ENCODE measurements at regions of chr17 and their contacts with region 1.

Region 1: DNA sequence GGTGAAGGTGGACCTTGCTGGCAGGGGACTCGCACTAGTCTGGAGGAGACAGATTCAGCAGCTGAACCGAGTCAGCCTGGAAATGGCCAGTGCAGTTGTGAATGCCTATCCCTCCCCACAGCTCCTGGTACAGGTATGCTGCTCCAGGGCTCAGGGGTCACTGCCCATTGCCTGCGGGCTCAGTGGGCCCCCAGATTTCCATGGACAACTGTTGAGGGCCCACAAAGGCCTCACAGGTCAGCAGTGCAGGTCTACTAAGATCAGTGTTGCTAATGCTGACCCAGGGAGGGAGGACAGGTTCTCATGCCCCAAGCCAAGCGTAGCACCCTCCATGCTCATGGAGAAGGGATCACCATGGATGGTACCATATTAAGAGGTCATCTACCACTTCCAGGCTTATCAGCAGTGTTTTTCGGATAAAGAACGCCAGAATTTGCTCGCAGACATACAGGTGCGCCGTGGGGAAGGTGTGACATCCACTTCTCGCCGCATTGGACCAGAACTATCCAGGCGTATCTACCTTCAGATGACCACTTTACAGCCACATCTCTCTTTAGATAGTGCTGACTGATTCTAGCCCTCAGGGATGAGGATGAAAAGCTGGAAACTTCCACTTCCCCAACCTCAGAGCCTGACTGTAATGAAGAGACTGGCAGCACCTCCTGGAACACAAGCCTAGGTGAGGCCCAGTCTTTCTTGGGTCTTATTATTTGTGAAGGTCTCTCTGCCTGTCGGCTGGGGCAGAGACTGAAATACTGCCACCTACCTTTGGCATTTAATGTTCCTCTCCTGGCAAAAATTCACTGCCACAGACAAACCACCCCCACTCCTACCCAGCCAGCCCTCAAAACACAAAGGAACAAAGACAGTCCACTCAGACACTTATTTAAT is 7.6 kb downstream of the EME1 start:
- DNase-seq: no peak
- ATAC-seq: peak; percentile 39
- H3K4me3 ChIP-seq: no peak overlapping the region
- H3K27ac ChIP-seq: no peak overlapping the region
- H3K4me1 ChIP-seq: peaks cover 0 to 4% of the 10 kb centered on the region in 2 experiments; a peak in 2 of 5 replicates
- H3K27me3 ChIP-seq: no peaks in the 10 kb centered on the region
- CTCF ChIP-seq: peak in 2 of 3 experiments; percentile 17 to 24; a peak in 1 of 6 replicates
- EP300 ChIP-seq: no peak
- POLR2A ChIP-seq: peak; percentile 71
- RAD21 ChIP-seq: no peak

Region 2: GRCh38 chr17:50361561-50362480 is 18.8 kb before region 1 on chr17:
- CTCF ChIA-PET with region 1: interaction called, 3 read pairs
- POLR2A ChIA-PET with region 1: interaction called, 10 read pairs
- in situ Hi-C with region 1: no loop called
- intact Hi-C with region 1: no loop called
- DNase-seq: peak; percentile 86 to 95 (median 91)
- ATAC-seq: peak; percentile 89
- H3K4me3 ChIP-seq: no peak overlapping the region
- H3K27ac ChIP-seq: peak overlapping the region; percentile 62
- H3K4me1 ChIP-seq: peaks cover 17 to 33% of the 10 kb centered on the region in 2 experiments
- H3K27me3 ChIP-seq: no peaks in the 10 kb centered on the region
- CTCF ChIP-seq: peak; percentile 83 to 93 (median 89)
- EP300 ChIP-seq: peak; percentile 75; the same call in 1 of the 2 replicates
- POLR2A ChIP-seq: 0 out of 2 replicates have a peak, but pooled peaks have one; percentile 36
- RAD21 ChIP-seq: peak; percentile 70 to 72